Dorsolateral prefrontal cortex (tissue), 120 donors: ENCODE measurements at regions of chr5 and their contacts with region 1.

Region 1: GRCh38 chr5:107571621-107572536 is 98.9 kb downstream of the EFNA5 start:
- DNase-seq: peak; percentile 83 to 96 (median 92)
- H3K4me3 ChIP-seq: peak overlapping the region; percentile 32 to 77 (median 58)
- H3K27ac ChIP-seq: peak overlapping the region in 38 of 59 donors; percentile 9 to 75 (median 56)
- H3K27me3 ChIP-seq: peaks cover 0 to 2% (median 0%) of the 10 kb centered on the region in 45 donors
- CTCF ChIP-seq: peak; percentile 87 to 98 (median 94)

Region 2: GRCh38 chr5:107067395-107067794 is 504.5 kb before region 1 on chr5:
- intact Hi-C with region 1: loop called in 1 of 2 experiments (anchors 10 kb)
- DNase-seq: peak in 9 of 10 donors; percentile 11 to 55 (median 45)
- H3K4me3 ChIP-seq: peak overlapping the region in 19 of 59 donors; percentile 2 to 37 (median 17)
- H3K27ac ChIP-seq: peak overlapping the region in 3 of 59 donors; percentile 1 to 28 (median 9)
- H3K27me3 ChIP-seq: no peaks in the 10 kb centered on the region
- CTCF ChIP-seq: peak in 39 of 56 donors; percentile 10 to 52 (median 35)